ENCODE measurements at regions of chr12 and their contacts with region 1.

Region 1: DNA sequence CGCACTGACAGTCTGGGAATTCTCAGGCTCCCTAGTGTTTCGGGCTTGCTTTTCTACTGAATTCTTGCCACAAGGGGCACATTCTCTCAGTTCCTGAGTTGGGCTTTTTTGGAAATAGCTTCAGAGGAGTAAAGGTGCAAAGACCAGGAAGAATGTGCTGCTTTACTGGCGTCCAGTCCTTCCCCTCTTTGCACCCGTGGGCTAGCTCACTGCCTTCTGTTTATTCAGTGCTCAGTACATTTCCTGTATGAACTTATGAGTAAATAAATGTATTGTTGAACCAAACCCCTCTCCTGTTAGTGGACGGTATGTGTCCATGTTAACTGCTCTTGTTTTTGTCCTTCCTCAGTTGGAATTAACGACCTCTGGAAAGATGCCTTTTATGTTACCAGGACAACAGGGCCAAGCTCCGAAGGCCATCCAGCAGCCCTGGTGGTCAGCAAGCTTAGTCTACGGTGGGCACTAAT is 24.0 kb downstream of the GSG1 start:
- DNase-seq: peak in 1 of 2 experiments; percentile 19
- H3K4me3 ChIP-seq: no peak overlapping the region
- H3K27ac ChIP-seq: no peak overlapping the region
- H3K4me1 ChIP-seq: peaks cover 0 to 5% (median 2%) of the 10 kb centered on the region in 4 experiments; a peak in 3 of 7 replicates
- H3K27me3 ChIP-seq: no peaks in the 10 kb centered on the region
- CTCF ChIP-seq: peak; percentile 34 to 85 (median 72)
- EP300 ChIP-seq: no peak
- POLR2A ChIP-seq: no peak
- RAD21 ChIP-seq: peak; percentile 50 to 68

Region 2: GRCh38 chr12:13061421-13062128 is 17.9 kb before region 1 on chr12:
- CTCF ChIA-PET with region 1: interaction called, 16 read pairs
- POLR2A ChIA-PET with region 1: no interaction called
- DNase-seq: no peak
- H3K4me3 ChIP-seq: no peak overlapping the region
- H3K27ac ChIP-seq: no peak overlapping the region
- H3K4me1 ChIP-seq: no peaks in the 10 kb centered on the region; a peak in 1 of 7 replicates
- H3K27me3 ChIP-seq: no peaks in the 10 kb centered on the region
- CTCF ChIP-seq: no peak
- EP300 ChIP-seq: no peak
- POLR2A ChIP-seq: no peak
- RAD21 ChIP-seq: no peak

Region 3: GRCh38 chr12:13094347-13094746 is 14.9 kb after region 1 on chr12:
- CTCF ChIA-PET with region 1: interaction called, 14 read pairs
- POLR2A ChIA-PET with region 1: interaction called, 13 read pairs
- DNase-seq: no peak
- H3K4me3 ChIP-seq: no peak overlapping the region
- H3K27ac ChIP-seq: no peak overlapping the region
- H3K4me1 ChIP-seq: peaks cover 2 to 9% (median 8%) of the 10 kb centered on the region in 4 experiments
- H3K27me3 ChIP-seq: no peaks in the 10 kb centered on the region
- CTCF ChIP-seq: no peak
- EP300 ChIP-seq: no peak
- POLR2A ChIP-seq: no peak
- RAD21 ChIP-seq: no peak

Region 4: GRCh38 chr12:13316587-13317246 is 237.2 kb after region 1 on chr12:
- CTCF ChIA-PET with region 1: no interaction called
- POLR2A ChIA-PET with region 1: no interaction called
- DNase-seq: no peak
- H3K4me3 ChIP-seq: no peak overlapping the region
- H3K27ac ChIP-seq: no peak overlapping the region
- H3K4me1 ChIP-seq: peaks cover 1 to 6% (median 4%) of the 10 kb centered on the region in 4 experiments; a peak in 3 of 7 replicates
- H3K27me3 ChIP-seq: no peaks in the 10 kb centered on the region
- CTCF ChIP-seq: no peak
- EP300 ChIP-seq: no peak
- POLR2A ChIP-seq: no peak
- RAD21 ChIP-seq: no peak